ENCODE measurements at regions of chr11 and their contacts with region 1.

Region 1: DNA sequence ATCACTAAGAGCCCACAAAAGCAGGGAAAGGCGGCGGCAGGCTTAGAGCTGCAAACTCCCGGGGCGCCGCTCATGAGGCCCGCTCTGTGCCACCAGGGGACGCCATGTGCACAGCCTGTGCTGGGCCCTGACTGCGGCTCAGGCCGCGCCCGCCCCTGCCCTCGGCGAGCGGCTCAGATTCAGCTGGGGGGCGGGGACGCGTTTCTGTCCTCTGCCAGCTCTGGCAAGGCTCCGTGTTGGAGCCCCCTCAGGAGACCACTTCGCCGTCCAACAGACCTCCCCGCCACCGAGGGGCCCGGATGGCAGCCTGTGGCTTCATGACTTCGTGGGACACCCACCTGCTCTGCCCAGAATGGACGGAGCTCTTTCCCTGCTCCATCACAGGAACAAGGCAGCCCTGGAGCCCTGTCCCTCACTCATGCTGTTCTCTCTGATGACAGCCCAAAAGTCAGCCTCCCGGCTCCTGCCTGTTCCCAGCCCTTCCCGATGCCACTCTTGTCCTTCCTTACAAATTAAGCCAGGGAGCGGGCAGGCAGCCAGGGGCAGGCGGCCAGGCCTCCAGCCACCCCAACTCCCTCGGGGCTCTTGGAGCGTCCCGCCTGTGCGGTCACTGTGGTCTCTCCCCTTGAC is 69.1 kb downstream of the NAT10 start:
- DNase-seq: peak; percentile 90
- CTCF ChIP-seq: peak; percentile 99

Region 2: GRCh38 chr11:33996498-33997454 is 177.8 kb before region 1 on chr11:
- CTCF ChIA-PET with region 1: interaction called, 16 read pairs
- POLR2A ChIA-PET with region 1: no interaction called
- DNase-seq: peak; percentile 77
- CTCF ChIP-seq: peak; percentile 73

Region 3: GRCh38 chr11:34161812-34162499 is 12.6 kb before region 1 on chr11:
- CTCF ChIA-PET with region 1: interaction called, 19 read pairs
- POLR2A ChIA-PET with region 1: no interaction called
- DNase-seq: no peak
- CTCF ChIP-seq: no peak

Region 4: DNA sequence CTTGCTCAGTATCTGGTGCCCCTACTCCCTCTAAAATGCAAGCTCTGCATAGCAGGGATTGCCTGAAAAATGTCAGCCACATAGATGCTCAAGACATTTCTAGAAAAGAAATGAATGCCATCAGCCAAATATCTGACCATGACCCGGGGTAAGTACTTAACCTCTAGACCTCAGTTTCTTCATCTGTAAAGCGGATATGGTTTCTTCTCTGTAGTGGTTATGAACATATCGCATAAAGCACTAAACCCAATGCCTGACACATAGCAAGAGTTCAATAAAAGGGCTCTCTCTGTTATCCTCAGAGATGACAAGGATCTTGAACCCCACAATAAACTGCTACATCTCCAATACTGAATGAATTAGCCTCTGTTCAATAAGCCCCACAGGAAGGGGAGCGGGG is 60.7 kb after region 1 on chr11:
- CTCF ChIA-PET with region 1: interaction called, 13 read pairs
- POLR2A ChIA-PET with region 1: no interaction called
- DNase-seq: no peak
- CTCF ChIP-seq: no peak

Region 5: GRCh38 chr11:34250732-34251639 is 76.5 kb after region 1 on chr11:
- CTCF ChIA-PET with region 1: interaction called, 14 read pairs
- POLR2A ChIA-PET with region 1: no interaction called
- DNase-seq: peak; percentile 56
- CTCF ChIP-seq: no peak

Region 6: DNA sequence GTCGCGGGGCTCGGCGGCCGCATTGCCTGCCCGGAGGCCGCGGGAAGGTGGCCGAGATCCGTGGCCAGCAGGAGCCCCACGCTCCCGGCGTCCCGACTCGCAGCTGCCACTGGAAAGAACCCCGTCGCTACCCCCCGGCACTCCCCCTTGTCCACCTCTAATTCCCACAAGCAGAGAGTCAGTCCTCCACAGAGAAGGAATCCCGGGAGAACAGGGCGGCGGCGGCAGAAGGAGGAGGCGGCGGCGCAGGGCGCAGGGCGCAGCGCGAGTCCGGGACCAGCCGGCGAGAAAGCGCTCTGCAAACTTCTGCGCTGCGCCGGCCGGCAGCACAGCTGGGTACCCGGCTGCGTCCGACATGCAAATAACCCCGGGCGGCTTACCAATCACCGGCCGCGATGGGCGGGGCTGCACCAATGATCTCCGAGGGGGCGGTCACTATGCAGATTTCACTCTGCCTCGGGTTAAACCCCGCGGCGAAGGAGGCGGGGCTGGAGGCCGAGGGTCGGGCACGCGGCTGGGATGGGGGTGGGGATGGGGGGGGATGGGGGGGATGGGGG is 183.3 kb after region 1 on chr11 and contains the start of gene ABTB2:
- CTCF ChIA-PET with region 1: interaction called, 121 read pairs
- POLR2A ChIA-PET with region 1: interaction called, 6 read pairs
- DNase-seq: peak; percentile 96
- CTCF ChIP-seq: no peak

Region 7: DNA sequence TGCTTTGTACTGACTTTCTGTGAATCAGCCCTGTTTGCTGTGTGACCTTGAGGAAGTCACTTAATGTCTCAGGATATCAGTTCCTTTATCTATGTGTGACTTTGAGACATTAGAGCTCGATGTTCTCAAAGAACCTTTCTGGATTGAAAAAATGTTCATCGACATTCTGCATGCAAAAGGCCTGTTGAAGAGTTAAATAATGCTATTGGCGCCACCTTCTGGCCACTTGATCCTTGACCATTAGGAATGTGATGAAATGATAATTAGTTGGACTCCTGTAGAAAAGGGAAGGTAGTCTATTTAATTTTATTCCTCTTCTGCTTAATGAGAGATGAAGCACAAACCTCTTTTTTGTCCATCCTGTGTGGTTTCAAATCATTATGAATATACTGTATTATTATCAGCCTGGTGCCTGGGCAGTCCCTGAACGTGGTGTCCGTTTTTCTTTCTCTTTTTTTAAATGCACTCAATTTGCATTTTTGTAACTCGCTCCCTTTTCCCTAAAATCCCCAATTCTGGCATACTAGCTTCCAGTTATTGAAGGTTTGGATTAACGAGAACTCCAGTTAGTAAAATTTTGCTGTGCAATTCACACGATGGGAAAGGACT is 318.4 kb after region 1 on chr11:
- CTCF ChIA-PET with region 1: interaction called, 13 read pairs
- POLR2A ChIA-PET with region 1: no interaction called
- DNase-seq: peak; percentile 63
- CTCF ChIP-seq: peak; percentile 82

Measured in GM10248 (cell line).